ENCODE measurements at regions of chr14 and their contacts with region 1.

Region 1: GRCh38 chr14:21476925-21477681 is at the starts of genes RAB2B and TOX4:
- DNase-seq: peak; percentile 99
- H3K4me3 ChIP-seq: peak within 1 kb of the TSS; percentile 68 to 88 (median 86)
- H3K27ac ChIP-seq: peak within 1 kb of the TSS; percentile 86 to 93 (median 90)
- H3K4me1 ChIP-seq: peaks cover 19 to 38% (median 28%) of the 10 kb centered on the region in 4 donors
- H3K27me3 ChIP-seq: no peaks in the 10 kb centered on the region
- CTCF ChIP-seq: peak; percentile 92 to 99 (median 97)
- EP300 ChIP-seq: peak; percentile 5
- POLR2A ChIP-seq: peak; percentile 82
- total RNA-seq, gene RAB2B: 26.2 to 41.0 (median 28.3) TPM
- total RNA-seq, gene TOX4: 42.6 to 81.2 (median 49.1) TPM

Region 2: GRCh38 chr14:21257394-21257909 is 219.7 kb before region 1 on chr14:
- intact Hi-C with region 1: no loop called
- DNase-seq: no peak
- H3K4me3 ChIP-seq: peak overlapping the region in 1 of 4 donors; percentile 1
- H3K27ac ChIP-seq: no peak overlapping the region
- H3K4me1 ChIP-seq: peaks cover 73 to 91% (median 89%) of the 10 kb centered on the region in 4 donors
- H3K27me3 ChIP-seq: no peaks in the 10 kb centered on the region
- CTCF ChIP-seq: no peak
- EP300 ChIP-seq: no peak
- POLR2A ChIP-seq: no peak

Region 3: GRCh38 chr14:21317398-21317797 is 159.7 kb before region 1 on chr14:
- intact Hi-C with region 1: no loop called
- DNase-seq: no peak
- H3K4me3 ChIP-seq: no peak overlapping the region
- H3K27ac ChIP-seq: no peak overlapping the region
- H3K4me1 ChIP-seq: no peaks in the 10 kb centered on the region
- H3K27me3 ChIP-seq: peaks cover 0 to 17% (median 0%) of the 10 kb centered on the region in 4 donors
- CTCF ChIP-seq: no peak
- EP300 ChIP-seq: no peak
- POLR2A ChIP-seq: no peak

Region 4: DNA sequence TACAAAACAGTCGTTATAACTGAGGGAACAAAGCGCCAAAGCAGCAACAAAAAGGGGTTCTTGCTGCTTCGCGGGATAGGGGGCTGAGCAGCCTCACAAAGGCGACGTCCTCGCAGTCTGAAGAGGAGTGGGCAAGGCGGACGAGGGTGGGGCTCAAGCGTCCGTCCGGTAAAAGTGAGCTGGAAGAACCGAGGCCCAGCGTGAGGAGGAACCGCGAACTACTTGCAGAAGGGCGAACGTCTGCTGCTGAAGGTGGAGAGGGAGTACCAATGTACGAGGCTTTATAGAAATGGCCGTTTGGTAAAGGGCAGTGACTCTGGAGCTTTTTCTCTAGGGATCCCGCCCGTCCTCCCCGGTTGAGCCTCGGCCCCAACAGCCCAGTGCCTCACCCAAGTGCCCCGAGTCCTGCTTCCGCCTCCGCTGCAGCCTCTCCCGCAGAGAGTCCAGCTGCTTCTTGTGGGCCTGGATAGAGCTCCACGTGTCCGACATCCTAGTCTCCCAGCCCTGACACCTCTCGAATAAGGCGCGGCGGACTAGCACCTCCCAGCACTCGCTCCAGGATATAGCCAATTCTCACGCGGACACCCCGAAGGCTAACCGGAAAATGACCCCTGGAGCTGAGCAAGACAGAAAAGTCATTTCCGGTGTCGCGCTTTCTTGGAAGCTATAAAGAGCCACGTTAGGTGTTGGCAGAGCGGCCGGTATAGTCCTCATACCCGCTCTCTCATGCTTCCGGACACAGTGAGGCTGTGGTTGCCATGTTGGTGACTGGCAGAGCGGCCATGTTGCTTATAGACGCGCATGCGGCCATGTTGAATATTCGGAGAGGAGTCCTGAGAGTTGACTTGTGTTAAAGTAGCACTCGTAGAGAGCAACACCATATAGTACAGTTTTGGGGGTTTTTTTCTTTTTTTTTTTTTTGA is 33.9 kb after region 1 on chr14 and contains the start of gene METTL3:
- intact Hi-C with region 1: loop called (anchors 5 kb)
- DNase-seq: peak; percentile 99
- H3K4me3 ChIP-seq: peak within 1 kb of the TSS; percentile 72 to 92 (median 73)
- H3K27ac ChIP-seq: peak within 1 kb of the TSS; percentile 73 to 89 (median 86)
- H3K4me1 ChIP-seq: peaks cover 12 to 36% (median 33%) of the 10 kb centered on the region in 4 donors
- H3K27me3 ChIP-seq: no peaks in the 10 kb centered on the region
- CTCF ChIP-seq: no peak
- EP300 ChIP-seq: no peak
- POLR2A ChIP-seq: no peak
- total RNA-seq, gene METTL3: 40.6 to 64.4 (median 48.0) TPM